Motor neuron (in vitro differentiated cells): ENCODE measurements at regions of chr11 and their contacts with region 1.

Region 1: GRCh38 chr11:62573592-62574362 is at the start of gene EEF1G:
- ATAC-seq: peak; percentile 85 to 92 (median 89)
- H3K4me3 ChIP-seq: peak within 1 kb of the TSS; percentile 54 to 68 (median 63)
- H3K27ac ChIP-seq: peak within 1 kb of the TSS; percentile 93 to 96
- H3K4me1 ChIP-seq: peaks cover 15 to 19% of the 10 kb centered on the region in 2 donors
- total RNA-seq, gene EEF1G: 1,525 to 3,247 (median 2,152) TPM

Region 2: DNA sequence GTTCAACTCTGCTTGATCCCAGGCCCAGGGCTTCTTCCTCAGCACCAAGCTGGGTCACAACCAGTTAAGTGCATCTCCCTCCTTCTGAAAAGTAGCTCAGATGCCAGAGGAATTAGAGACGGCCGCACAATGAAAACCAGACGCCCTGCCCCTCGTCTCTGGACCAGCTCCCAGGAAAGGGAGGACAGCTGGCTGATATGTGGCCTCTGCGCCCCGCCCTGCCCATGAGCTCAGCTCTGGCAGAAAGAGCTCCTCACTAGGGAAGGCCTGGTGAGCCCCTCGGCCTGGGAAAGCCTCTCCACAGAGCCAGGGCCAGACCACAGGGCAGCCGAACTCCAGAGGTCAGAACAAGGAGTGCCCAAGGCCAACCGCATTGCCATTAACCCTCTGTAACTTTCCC is 173.0 kb before region 1 on chr11:
- in situ Hi-C with region 1: loop called in 3 of 9 experiments (anchors 25 kb)
- ATAC-seq: peak; percentile 57 to 87 (median 71)
- H3K4me3 ChIP-seq: no peak overlapping the region
- H3K27ac ChIP-seq: no peak overlapping the region
- H3K4me1 ChIP-seq: peaks cover 30 to 40% of the 10 kb centered on the region in 2 donors